ENCODE measurements at regions of chr2 and their contacts with region 1.

Region 1: DNA sequence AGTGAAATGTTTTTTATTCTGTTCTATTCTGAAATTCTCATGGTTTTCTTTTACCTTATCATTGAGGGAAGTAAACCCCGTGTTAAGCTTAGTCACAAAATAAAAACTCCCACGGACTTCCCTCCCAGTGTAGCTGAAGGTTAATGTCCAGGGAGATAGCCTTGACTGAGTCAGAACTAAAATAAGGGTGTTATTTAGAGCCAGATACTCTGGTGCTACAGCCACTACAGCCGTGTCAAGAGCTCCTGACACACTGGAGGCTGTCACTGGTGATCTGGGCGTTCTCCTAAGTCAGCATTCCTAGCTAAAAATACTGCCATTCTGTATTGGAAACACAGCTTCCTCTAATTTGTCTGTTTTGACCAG is 82.0 kb upstream of the RANBP2 start:
- DNase-seq: peak in 1 of 9 experiments; percentile 34
- ATAC-seq: no peak
- H3K4me3 ChIP-seq: no peak overlapping the region
- H3K4me3 Mint-ChIP-seq: no peak overlapping the region
- H3K27ac ChIP-seq: no peak overlapping the region
- H3K27ac Mint-ChIP-seq: no peak overlapping the region
- H3K4me1 ChIP-seq: no peaks in the 10 kb centered on the region
- H3K4me1 Mint-ChIP-seq: peaks cover 25% of the 10 kb centered on the region
- H3K27me3 ChIP-seq: no peaks in the 10 kb centered on the region
- H3K27me3 Mint-ChIP-seq: no peaks in the 10 kb centered on the region
- CTCF ChIP-seq: no peak

Region 2: GRCh38 chr2:108594132-108594981 is 42.9 kb before region 1 on chr2:
- CTCF ChIA-PET with region 1: interaction called, 57 read pairs
- POLR2A ChIA-PET with region 1: no interaction called
- intact Hi-C with region 1: loop called in 1 of 2 experiments (anchors 2 kb)
- DNase-seq: no peak
- ATAC-seq: peak; percentile 33
- H3K4me3 ChIP-seq: no peak overlapping the region
- H3K4me3 Mint-ChIP-seq: no peak overlapping the region
- H3K27ac ChIP-seq: no peak overlapping the region
- H3K27ac Mint-ChIP-seq: no peak overlapping the region
- H3K4me1 ChIP-seq: peaks cover 7% of the 10 kb centered on the region
- H3K4me1 Mint-ChIP-seq: peaks cover 25% of the 10 kb centered on the region
- H3K27me3 ChIP-seq: no peaks in the 10 kb centered on the region
- H3K27me3 Mint-ChIP-seq: no peaks in the 10 kb centered on the region
- CTCF ChIP-seq: no peak

Region 3: DNA sequence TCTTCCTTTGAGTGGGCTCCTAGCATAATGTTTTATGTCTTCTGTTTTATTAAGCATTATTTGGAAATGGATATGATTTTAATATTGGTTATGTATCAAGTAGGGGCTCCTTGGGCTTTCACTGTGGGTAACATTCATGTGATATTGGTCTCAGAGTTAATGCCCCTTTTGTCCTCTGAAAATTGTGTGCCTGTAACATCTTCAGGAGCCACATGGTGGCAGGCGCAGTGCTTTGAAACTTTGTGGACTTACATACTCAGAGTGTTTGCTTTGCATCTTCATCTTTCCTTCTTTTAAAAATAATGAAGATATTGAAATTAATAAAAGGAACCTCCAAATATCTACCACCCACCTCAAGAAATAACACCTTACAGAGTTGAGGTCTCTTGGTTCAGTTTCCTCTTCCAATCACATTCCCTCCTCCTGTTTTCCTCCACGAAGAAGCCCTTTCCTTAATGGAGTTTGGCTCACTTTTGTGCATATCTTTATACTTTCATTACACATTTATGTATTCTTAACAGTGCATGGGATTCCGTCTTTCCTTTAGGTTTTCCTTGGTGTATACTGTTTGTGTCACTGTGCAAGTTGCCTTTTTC is 29.5 kb before region 1 on chr2:
- CTCF ChIA-PET with region 1: interaction called, 200 read pairs
- POLR2A ChIA-PET with region 1: no interaction called
- intact Hi-C with region 1: loop called (anchors 1 kb)
- DNase-seq: peak in 7 of 9 experiments; percentile 23 to 65 (median 48)
- ATAC-seq: peak; percentile 50
- H3K4me3 ChIP-seq: no peak overlapping the region
- H3K4me3 Mint-ChIP-seq: no peak overlapping the region
- H3K27ac ChIP-seq: no peak overlapping the region
- H3K27ac Mint-ChIP-seq: no peak overlapping the region
- H3K4me1 ChIP-seq: peaks cover 5% of the 10 kb centered on the region
- H3K4me1 Mint-ChIP-seq: peaks cover 29% of the 10 kb centered on the region
- H3K27me3 ChIP-seq: no peaks in the 10 kb centered on the region
- H3K27me3 Mint-ChIP-seq: no peaks in the 10 kb centered on the region
- CTCF ChIP-seq: peak; percentile 72

Region 4: DNA sequence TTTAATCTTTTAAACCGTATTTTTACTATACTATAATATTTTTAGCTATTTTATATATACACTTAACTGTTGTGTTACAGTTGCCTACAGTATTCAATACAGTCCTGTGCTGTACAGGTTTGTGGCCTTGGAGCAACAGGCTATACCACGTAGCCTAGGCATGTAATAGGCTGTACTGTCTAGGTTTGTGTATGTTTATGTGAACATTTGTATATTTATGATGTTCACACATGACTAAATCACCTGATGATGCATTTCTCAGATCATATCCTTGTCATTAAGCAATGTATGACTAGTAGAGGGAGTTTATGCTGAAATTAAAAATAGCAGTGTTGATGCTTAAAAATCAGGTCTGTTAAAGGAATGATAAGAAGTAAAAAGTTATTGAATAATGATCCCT is 10.3 kb before region 1 on chr2:
- CTCF ChIA-PET with region 1: interaction called, 100 read pairs
- POLR2A ChIA-PET with region 1: interaction called, 3 read pairs
- intact Hi-C with region 1: no loop called
- DNase-seq: no peak
- ATAC-seq: peak; percentile 12
- H3K4me3 ChIP-seq: no peak overlapping the region
- H3K4me3 Mint-ChIP-seq: no peak overlapping the region
- H3K27ac ChIP-seq: no peak overlapping the region
- H3K27ac Mint-ChIP-seq: no peak overlapping the region
- H3K4me1 ChIP-seq: peaks cover 10% of the 10 kb centered on the region
- H3K4me1 Mint-ChIP-seq: peaks cover 75% of the 10 kb centered on the region
- H3K27me3 ChIP-seq: no peaks in the 10 kb centered on the region
- H3K27me3 Mint-ChIP-seq: no peaks in the 10 kb centered on the region
- CTCF ChIP-seq: no peak